Natural killer cell (primary cell): ENCODE measurements at regions of chr4 and their contacts with region 1.

Region 1: GRCh38 chr4:185471235-185472102 is at the start of gene CCDC110:
- DNase-seq: peak; percentile 70 to 97
- ATAC-seq: peak; percentile 88 to 95 (median 91)
- H3K4me3 ChIP-seq: peak within 1 kb of the TSS; percentile 66
- H3K4me3 Mint-ChIP-seq: peak within 1 kb of the TSS; percentile 93
- H3K27ac ChIP-seq: peak within 1 kb of the TSS; percentile 53
- H3K27ac Mint-ChIP-seq: peak within 1 kb of the TSS; percentile 69 to 80
- H3K4me1 ChIP-seq: peaks cover 17% of the 10 kb centered on the region
- H3K4me1 Mint-ChIP-seq: peaks cover 12 to 17% of the 10 kb centered on the region in 2 donors
- H3K27me3 ChIP-seq: peaks cover 5% of the 10 kb centered on the region
- H3K27me3 Mint-ChIP-seq: peaks cover 9 to 11% of the 10 kb centered on the region in 2 donors
- CTCF ChIP-seq: peak; percentile 52
- total RNA-seq, gene CCDC110: not detected

Region 2: GRCh38 chr4:185395956-185396723 is 75.3 kb before region 1 on chr4:
- intact Hi-C with region 1: loop called (anchors 2 kb)
- DNase-seq: peak; percentile 97 to 98
- ATAC-seq: peak; percentile 89 to 98 (median 92)
- H3K4me3 ChIP-seq: peak overlapping the region; percentile 96
- H3K4me3 Mint-ChIP-seq: peak overlapping the region; percentile 96
- H3K27ac ChIP-seq: peak overlapping the region; percentile 99
- H3K27ac Mint-ChIP-seq: peak overlapping the region; percentile 94 to 97
- H3K4me1 ChIP-seq: peaks cover 7% of the 10 kb centered on the region
- H3K4me1 Mint-ChIP-seq: peaks cover 25 to 26% of the 10 kb centered on the region in 2 donors
- H3K27me3 ChIP-seq: no peaks in the 10 kb centered on the region
- H3K27me3 Mint-ChIP-seq: no peaks in the 10 kb centered on the region
- CTCF ChIP-seq: no peak

Region 3: GRCh38 chr4:185425647-185426352 is 45.7 kb before region 1 on chr4 and contains the start of gene UFSP2:
- intact Hi-C with region 1: loop called (anchors 2 kb)
- DNase-seq: peak; percentile 95 to 96
- ATAC-seq: peak; percentile 86 to 95 (median 86)
- H3K4me3 ChIP-seq: peak within 1 kb of the TSS; percentile 90
- H3K4me3 Mint-ChIP-seq: peak within 1 kb of the TSS; percentile 87
- H3K27ac ChIP-seq: peak within 1 kb of the TSS; percentile 93
- H3K27ac Mint-ChIP-seq: peak within 1 kb of the TSS; percentile 84 to 89
- H3K4me1 ChIP-seq: peaks cover 13% of the 10 kb centered on the region
- H3K4me1 Mint-ChIP-seq: peaks cover 9 to 32% of the 10 kb centered on the region in 2 donors
- H3K27me3 ChIP-seq: no peaks in the 10 kb centered on the region
- H3K27me3 Mint-ChIP-seq: peaks cover 2 to 11% of the 10 kb centered on the region in 2 donors
- CTCF ChIP-seq: no peak
- total RNA-seq, gene UFSP2: 14.0 to 18.8 (median 16.7) TPM

Region 4: DNA sequence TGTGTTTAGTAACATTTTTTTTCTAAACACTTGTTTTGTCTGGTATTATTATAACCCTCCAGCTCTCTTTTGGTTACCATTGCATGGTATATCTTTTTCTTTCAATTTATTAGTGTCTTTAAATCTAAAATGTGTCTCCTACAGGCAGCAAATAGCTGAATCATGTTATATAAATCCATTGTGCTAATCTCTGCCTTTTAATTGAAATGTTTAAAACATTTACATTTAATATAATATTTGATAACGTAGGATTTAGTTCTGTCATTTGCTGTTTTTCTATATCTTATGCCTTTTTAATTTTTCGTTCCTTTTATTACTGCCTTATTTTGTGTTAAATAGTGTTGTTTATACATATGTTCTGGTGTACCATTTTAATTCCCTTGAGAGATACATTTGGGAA is 17.2 kb after region 1 on chr4:
- intact Hi-C with region 1: no loop called
- DNase-seq: no peak
- ATAC-seq: no peak
- H3K4me3 ChIP-seq: no peak overlapping the region
- H3K4me3 Mint-ChIP-seq: no peak overlapping the region
- H3K27ac ChIP-seq: no peak overlapping the region
- H3K27ac Mint-ChIP-seq: no peak overlapping the region
- H3K4me1 ChIP-seq: no peaks in the 10 kb centered on the region
- H3K4me1 Mint-ChIP-seq: no peaks in the 10 kb centered on the region
- H3K27me3 ChIP-seq: no peaks in the 10 kb centered on the region
- H3K27me3 Mint-ChIP-seq: peaks cover 11 to 41% of the 10 kb centered on the region in 2 donors
- CTCF ChIP-seq: no peak